MCF 10A (cell line): ENCODE measurements at regions of chr7 and their contacts with region 1.

Region 1: DNA sequence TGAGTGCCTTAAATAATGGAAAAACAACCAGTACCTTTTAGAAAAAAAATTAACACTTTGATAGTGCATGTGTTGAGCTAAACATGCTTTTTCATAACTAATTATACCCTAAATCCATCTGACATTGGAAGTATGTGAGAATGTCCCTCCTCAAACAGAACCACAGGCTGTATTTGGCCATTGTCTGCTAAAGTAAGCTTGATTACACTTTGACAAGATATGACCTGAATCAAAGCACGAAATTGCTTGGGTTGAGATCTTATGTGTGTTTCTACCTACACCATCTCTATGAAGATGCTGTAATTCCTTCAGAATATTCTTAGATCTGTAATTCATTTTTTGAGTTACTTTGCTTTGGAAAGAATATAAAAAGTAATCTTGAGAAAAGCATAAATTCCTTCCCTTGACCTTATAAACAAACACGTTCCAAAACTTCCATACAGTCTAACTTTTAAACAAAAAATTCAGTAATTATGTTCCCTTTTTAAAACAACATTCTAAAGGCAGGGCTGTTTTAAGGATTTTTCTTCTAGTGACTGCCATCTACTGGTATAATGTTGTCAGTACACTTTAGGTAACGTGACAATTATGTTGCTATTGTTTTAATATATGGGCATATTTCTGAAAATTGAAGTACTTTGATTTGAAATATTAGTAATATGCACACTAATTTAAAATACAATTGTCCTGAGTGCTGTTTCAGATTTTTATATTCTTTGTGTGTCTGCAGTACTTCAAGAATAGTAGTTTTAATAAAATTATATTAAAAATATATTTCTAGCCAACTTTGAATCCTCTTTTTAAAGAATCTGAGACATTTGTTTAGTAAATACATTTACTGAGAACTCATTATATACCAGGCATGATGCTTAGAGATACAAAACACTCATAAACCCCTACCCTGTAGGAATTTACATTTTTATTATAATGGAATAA is 20.9 kb downstream of the CD36 start:
- DNase-seq: peak; percentile 56
- H3K4me3 Mint-ChIP-seq: no peak overlapping the region
- H3K27ac Mint-ChIP-seq: no peak overlapping the region
- H3K4me1 Mint-ChIP-seq: no peaks in the 10 kb centered on the region
- H3K27me3 Mint-ChIP-seq: no peaks in the 10 kb centered on the region
- CTCF ChIP-seq: peak; percentile 45

Region 2: DNA sequence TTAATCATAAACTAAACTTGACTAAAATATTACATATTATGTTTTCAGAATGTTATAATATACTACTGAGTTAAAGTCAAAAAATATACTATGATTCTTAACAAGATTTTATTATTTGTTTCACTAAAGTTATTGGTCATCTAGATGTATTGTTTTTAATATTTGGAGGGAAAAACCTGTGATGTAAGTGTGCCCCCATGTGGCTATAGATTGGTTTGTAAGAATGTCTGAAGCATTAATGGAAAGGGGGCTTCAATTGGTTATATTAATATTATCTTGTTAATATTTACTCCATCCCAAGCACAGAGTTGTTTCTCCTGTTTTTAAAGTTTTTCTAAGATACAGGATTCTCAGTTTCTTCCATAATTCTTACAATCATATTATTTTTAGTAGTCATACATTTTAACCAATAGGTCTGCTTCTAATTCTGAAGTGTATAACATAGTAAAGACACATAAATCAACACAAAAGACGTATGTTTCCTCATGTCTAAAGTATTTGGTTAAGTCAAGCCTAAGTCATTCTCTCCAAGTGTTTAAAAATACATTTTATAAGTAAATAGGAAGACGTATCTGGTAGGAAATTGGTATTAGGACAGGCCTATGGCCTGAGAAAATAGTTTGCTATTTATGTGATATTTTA is 205.6 kb before region 1 on chr7:
- CTCF ChIA-PET with region 1: interaction called, 4 read pairs
- POLR2A ChIA-PET with region 1: no interaction called
- intact Hi-C with region 1: loop called (anchors 1 kb)
- DNase-seq: peak; percentile 43
- H3K4me3 Mint-ChIP-seq: no peak overlapping the region
- H3K27ac Mint-ChIP-seq: no peak overlapping the region
- H3K4me1 Mint-ChIP-seq: peaks cover 4% of the 10 kb centered on the region
- H3K27me3 Mint-ChIP-seq: no peaks in the 10 kb centered on the region
- CTCF ChIP-seq: peak; percentile 52

Region 3: GRCh38 chr7:80681272-80681885 is 22.0 kb after region 1 on chr7:
- CTCF ChIA-PET with region 1: interaction called, 42 read pairs
- POLR2A ChIA-PET with region 1: no interaction called
- intact Hi-C with region 1: no loop called
- DNase-seq: peak; percentile 58
- H3K4me3 Mint-ChIP-seq: no peak overlapping the region
- H3K27ac Mint-ChIP-seq: no peak overlapping the region
- H3K4me1 Mint-ChIP-seq: no peaks in the 10 kb centered on the region
- H3K27me3 Mint-ChIP-seq: no peaks in the 10 kb centered on the region
- CTCF ChIP-seq: peak; percentile 39